ENCODE measurements at regions of chr1 and their contacts with region 1.

Region 1: GRCh38 chr1:214213136-214213535 is 67.8 kb upstream of the SMYD2 start:
- DNase-seq: peak in 1 of 2 experiments; percentile 21
- H3K4me3 ChIP-seq: no peak overlapping the region
- H3K4me3 Mint-ChIP-seq: no peak overlapping the region
- H3K27ac Mint-ChIP-seq: peak overlapping the region; percentile 53
- H3K4me1 ChIP-seq: peaks cover 73% of the 10 kb centered on the region
- H3K4me1 Mint-ChIP-seq: peaks cover 42% of the 10 kb centered on the region
- H3K27me3 ChIP-seq: no peaks in the 10 kb centered on the region
- H3K27me3 Mint-ChIP-seq: no peaks in the 10 kb centered on the region
- CTCF ChIP-seq: no peak

Region 2: DNA sequence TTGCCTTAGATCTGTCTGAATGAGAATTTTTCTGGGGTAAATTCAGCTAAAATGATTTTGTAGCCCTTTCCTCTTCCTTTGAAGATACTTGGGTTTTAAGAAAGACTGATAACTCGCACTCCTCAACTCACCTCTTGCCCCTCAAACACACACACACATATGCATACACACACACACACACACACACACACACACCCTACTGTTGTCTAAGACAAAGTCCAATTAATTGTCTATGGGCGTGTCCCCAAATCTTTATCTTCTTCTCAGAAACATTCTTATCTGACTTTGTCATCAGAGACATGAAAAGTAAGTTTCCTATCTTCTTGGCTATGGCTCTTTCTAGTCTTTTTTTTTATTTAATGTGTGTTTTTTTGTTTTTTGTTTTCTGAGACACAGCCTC is 31.7 kb after region 1 on chr1:
- CTCF ChIA-PET with region 1: no interaction called
- POLR2A ChIA-PET with region 1: no interaction called
- intact Hi-C with region 1: loop called (anchors 2 kb)
- DNase-seq: peak; percentile 62 to 63
- H3K4me3 ChIP-seq: no peak overlapping the region
- H3K4me3 Mint-ChIP-seq: peak overlapping the region; percentile 22
- H3K27ac Mint-ChIP-seq: peak overlapping the region; percentile 83
- H3K4me1 ChIP-seq: peaks cover 22% of the 10 kb centered on the region
- H3K4me1 Mint-ChIP-seq: peaks cover 33% of the 10 kb centered on the region
- H3K27me3 ChIP-seq: no peaks in the 10 kb centered on the region
- H3K27me3 Mint-ChIP-seq: no peaks in the 10 kb centered on the region
- CTCF ChIP-seq: no peak

Region 3: GRCh38 chr1:214281021-214281719 is 68.0 kb after region 1 on chr1 and contains the start of gene SMYD2:
- CTCF ChIA-PET with region 1: interaction called, 7 read pairs
- POLR2A ChIA-PET with region 1: no interaction called
- intact Hi-C with region 1: loop called (anchors 1 kb)
- DNase-seq: peak; percentile 82 to 87
- H3K4me3 ChIP-seq: peak within 1 kb of the TSS; percentile 89
- H3K4me3 Mint-ChIP-seq: peak within 1 kb of the TSS; percentile 94
- H3K27ac Mint-ChIP-seq: peak within 1 kb of the TSS; percentile 94
- H3K4me1 ChIP-seq: peaks cover 69% of the 10 kb centered on the region
- H3K4me1 Mint-ChIP-seq: peaks cover 53% of the 10 kb centered on the region
- H3K27me3 ChIP-seq: no peaks in the 10 kb centered on the region
- H3K27me3 Mint-ChIP-seq: no peaks in the 10 kb centered on the region
- CTCF ChIP-seq: no peak
- total RNA-seq, gene SMYD2: 161 and 182 TPM in 2 replicates

Region 4: DNA sequence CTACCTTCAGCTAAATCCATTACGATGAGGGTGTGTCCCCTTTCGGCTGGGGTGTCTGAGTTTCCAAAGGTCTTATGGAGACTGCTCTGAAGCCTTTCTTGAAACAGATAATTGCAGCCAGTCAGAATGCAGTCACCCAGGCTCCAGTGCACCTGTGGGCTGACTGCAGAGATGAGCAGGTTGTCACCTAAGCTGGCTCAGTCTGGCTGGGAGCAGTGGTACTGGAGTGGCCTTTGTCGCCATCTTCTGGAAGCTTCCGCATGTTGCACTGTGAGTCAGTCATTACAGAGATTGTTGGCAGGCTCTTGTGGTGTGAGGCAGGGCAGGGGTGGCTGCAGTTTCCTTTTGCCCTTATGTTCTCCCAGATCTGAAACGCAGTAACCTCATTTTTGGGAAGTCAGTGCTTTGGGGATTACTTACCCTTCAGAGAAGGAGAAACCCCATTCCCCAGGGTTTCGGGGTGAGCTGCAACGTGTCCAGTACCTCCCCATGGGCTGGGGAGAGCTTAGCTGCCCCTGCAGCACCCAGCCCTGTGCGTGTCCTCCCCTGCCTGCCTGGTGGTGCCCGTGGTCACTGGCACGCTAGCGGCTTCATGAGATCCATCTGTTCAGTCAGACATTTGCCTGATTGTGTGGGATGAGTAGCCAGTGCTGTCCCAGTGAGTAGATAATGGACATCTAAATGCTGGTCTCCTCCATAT is 115.8 kb after region 1 on chr1:
- CTCF ChIA-PET with region 1: interaction called, 99 read pairs
- POLR2A ChIA-PET with region 1: no interaction called
- intact Hi-C with region 1: loop called (anchors 1 kb)
- DNase-seq: peak; percentile 86 to 88
- H3K4me3 ChIP-seq: no peak overlapping the region
- H3K4me3 Mint-ChIP-seq: peak overlapping the region; percentile 44
- H3K27ac Mint-ChIP-seq: peak overlapping the region; percentile 63
- H3K4me1 ChIP-seq: peaks cover 32% of the 10 kb centered on the region
- H3K4me1 Mint-ChIP-seq: peaks cover 55% of the 10 kb centered on the region
- H3K27me3 ChIP-seq: no peaks in the 10 kb centered on the region
- H3K27me3 Mint-ChIP-seq: no peaks in the 10 kb centered on the region
- CTCF ChIP-seq: peak; percentile 93

Region 5: DNA sequence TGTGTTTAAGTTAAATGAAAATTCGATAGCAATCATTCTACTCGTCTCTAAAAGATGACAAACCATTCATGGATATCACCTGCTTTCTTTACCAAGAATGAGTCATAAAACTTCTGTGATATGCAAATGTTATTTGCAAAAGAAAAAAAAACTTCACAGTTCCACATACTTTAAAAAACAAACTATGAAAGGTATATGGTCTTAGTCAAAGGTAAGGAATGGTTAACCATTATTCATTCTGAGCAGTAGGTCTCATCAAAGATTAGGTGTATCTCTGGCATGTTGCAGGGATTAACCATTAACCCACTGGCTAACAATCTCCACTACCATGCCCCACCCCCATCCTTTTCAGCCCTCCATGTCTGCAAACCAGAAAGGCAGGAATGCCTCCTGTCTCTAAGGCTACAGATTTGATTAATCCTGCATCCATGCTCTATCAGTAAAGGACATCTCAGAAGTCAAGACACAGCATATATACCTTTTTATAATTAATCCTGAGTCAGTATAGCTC is 293.9 kb after region 1 on chr1:
- CTCF ChIA-PET with region 1: no interaction called
- POLR2A ChIA-PET with region 1: no interaction called
- intact Hi-C with region 1: loop called (anchors 5 kb)
- DNase-seq: peak; percentile 97
- H3K4me3 ChIP-seq: peak overlapping the region; percentile 34
- H3K4me3 Mint-ChIP-seq: peak overlapping the region; percentile 65
- H3K27ac Mint-ChIP-seq: peak overlapping the region; percentile 92
- H3K4me1 ChIP-seq: peaks cover 59% of the 10 kb centered on the region
- H3K4me1 Mint-ChIP-seq: peaks cover 47% of the 10 kb centered on the region
- H3K27me3 ChIP-seq: no peaks in the 10 kb centered on the region
- H3K27me3 Mint-ChIP-seq: no peaks in the 10 kb centered on the region
- CTCF ChIP-seq: no peak

Region 6: DNA sequence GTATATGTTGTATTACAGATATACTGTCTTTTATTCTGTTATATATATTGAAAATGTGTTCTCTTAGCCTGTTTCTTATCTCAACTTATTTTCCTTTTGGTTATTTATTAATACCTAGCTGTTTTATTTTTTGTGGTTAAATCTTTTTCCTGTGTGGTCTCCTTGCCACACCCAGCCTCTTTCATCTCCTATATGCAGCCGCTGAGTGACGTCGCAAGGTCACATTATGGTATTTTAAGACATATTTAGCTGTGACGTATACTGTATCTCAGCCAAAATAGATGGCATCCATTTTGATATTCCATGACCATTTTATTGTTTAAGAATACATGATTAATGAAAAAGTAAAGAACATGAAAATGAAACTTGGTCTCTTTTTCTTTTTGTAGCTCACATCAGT is 419.0 kb after region 1 on chr1:
- CTCF ChIA-PET with region 1: interaction called, 3 read pairs
- POLR2A ChIA-PET with region 1: no interaction called
- intact Hi-C with region 1: loop called (anchors 1 kb)
- DNase-seq: no peak
- H3K4me3 ChIP-seq: no peak overlapping the region
- H3K4me3 Mint-ChIP-seq: no peak overlapping the region
- H3K27ac Mint-ChIP-seq: no peak overlapping the region
- H3K4me1 ChIP-seq: no peaks in the 10 kb centered on the region
- H3K4me1 Mint-ChIP-seq: no peaks in the 10 kb centered on the region
- H3K27me3 ChIP-seq: no peaks in the 10 kb centered on the region
- H3K27me3 Mint-ChIP-seq: no peaks in the 10 kb centered on the region
- CTCF ChIP-seq: no peak

Region 7: GRCh38 chr1:215146341-215146826 is 933.2 kb after region 1 on chr1:
- CTCF ChIA-PET with region 1: no interaction called
- POLR2A ChIA-PET with region 1: no interaction called
- intact Hi-C with region 1: loop called (anchors 10 kb)
- DNase-seq: peak in 1 of 2 experiments; percentile 29
- H3K4me3 ChIP-seq: no peak overlapping the region
- H3K4me3 Mint-ChIP-seq: no peak overlapping the region
- H3K27ac Mint-ChIP-seq: no peak overlapping the region
- H3K4me1 ChIP-seq: no peaks in the 10 kb centered on the region
- H3K4me1 Mint-ChIP-seq: no peaks in the 10 kb centered on the region
- H3K27me3 ChIP-seq: no peaks in the 10 kb centered on the region
- H3K27me3 Mint-ChIP-seq: no peaks in the 10 kb centered on the region
- CTCF ChIP-seq: peak; percentile 59 to 69

Measured in Caco-2 (cell line).